ENCODE measurements at regions of chr2 and their contacts with region 1.

Region 1: GRCh38 chr2:31170071-31170698 is 31.9 kb upstream of the GALNT14 start:
- DNase-seq: peak; percentile 63
- H3K4me3 Mint-ChIP-seq: no peak overlapping the region
- H3K27ac Mint-ChIP-seq: no peak overlapping the region
- H3K4me1 Mint-ChIP-seq: no peaks in the 10 kb centered on the region
- H3K27me3 Mint-ChIP-seq: peaks cover 14% of the 10 kb centered on the region

Region 2: GRCh38 chr2:30862054-30862651 is 308.0 kb before region 1 on chr2:
- CTCF ChIA-PET with region 1: interaction called, 57 read pairs
- DNase-seq: peak; percentile 61
- H3K4me3 Mint-ChIP-seq: no peak overlapping the region
- H3K27ac Mint-ChIP-seq: no peak overlapping the region
- H3K4me1 Mint-ChIP-seq: peaks cover 13% of the 10 kb centered on the region
- H3K27me3 Mint-ChIP-seq: peaks cover 22% of the 10 kb centered on the region

Region 3: GRCh38 chr2:31089645-31090044 is 80.5 kb before region 1 on chr2:
- CTCF ChIA-PET with region 1: interaction called, 10 read pairs
- DNase-seq: no peak
- H3K4me3 Mint-ChIP-seq: no peak overlapping the region
- H3K27ac Mint-ChIP-seq: no peak overlapping the region
- H3K4me1 Mint-ChIP-seq: no peaks in the 10 kb centered on the region
- H3K27me3 Mint-ChIP-seq: peaks cover 5% of the 10 kb centered on the region

Region 4: DNA sequence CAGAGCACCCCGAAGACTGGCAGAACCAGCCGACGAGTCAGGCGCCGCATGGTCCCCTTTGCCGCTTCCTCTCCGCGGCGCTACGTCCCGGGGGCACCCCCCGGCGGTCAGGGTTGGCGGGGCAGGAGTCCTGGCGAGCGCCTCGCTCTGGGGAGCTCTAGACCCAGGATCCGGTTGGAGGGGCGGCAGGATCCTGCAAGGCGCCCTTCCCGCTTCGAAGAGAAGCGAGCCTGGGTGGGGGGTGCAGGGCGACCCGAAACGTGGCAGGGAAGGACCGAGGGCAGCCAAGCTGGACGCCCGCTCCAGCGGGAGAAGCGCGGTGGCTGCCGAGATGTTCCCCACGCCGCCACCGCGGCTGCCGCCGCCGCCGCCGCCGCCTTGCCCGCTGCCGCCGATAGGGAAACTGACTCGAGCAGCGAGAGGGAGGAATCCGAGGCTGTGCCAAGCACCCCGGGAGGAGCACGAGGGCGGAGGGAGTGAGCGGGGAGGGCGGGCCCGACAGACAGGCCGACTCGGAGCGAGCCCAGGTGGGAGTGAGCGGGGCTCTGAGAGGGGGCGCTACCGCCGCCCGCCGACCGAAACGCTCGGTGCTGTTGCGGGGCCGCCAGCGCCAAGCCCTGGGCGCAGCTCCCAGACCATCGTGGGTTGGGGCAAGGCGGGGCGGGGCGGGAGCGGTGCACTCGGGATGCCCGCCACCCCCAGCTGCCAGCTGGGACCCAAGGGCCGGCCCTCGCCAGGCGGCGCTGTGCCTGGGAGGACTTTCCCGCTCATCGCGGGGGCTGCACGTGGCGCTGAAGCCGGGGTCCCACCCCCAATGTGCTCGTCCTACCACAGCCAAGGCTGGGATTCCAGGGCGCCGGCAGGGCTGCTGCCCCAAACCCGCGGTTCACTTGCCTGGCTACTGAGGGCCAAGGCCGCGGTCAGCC is 31.9 kb before region 1 on chr2 and contains the start of gene GALNT14:
- CTCF ChIA-PET with region 1: interaction called, 18 read pairs
- DNase-seq: peak; percentile 53
- H3K4me3 Mint-ChIP-seq: peak within 1 kb of the TSS; percentile 43
- H3K27ac Mint-ChIP-seq: no peak within 1 kb of the TSS
- H3K4me1 Mint-ChIP-seq: peaks cover 9% of the 10 kb centered on the region
- H3K27me3 Mint-ChIP-seq: peaks cover 83% of the 10 kb centered on the region

Region 5: DNA sequence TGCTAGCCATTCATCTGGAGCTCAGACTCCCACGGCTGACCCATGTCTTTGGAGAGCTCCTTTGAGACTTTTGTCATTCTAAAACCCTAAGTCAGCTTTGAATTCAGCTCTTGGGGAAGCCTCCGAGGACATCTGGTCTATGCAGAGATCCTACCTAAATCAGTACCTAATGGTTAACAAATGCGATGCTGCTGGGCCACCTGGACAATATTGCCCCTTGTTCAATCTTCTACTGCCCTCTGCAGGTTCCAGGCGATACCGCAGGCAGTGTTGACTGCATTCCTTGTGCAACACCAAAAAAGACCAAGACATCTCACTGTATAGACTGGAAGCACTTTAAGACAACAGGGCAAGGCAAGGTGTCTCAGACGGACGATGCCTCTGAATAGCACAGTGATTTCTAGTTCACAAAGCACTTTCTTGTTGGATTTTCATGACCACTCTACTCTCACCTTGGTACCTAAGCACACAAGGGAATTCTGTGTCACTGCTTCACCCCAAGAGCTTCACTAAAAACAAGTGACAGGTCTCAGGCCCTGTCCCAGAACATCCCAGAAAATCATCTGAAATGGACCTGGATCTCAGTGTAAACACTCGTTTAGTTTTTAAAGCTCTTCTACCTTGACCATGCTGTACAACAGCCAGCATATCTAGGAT is 163.5 kb after region 1 on chr2:
- CTCF ChIA-PET with region 1: interaction called, 30 read pairs
- DNase-seq: peak; percentile 88
- H3K4me3 Mint-ChIP-seq: no peak overlapping the region
- H3K27ac Mint-ChIP-seq: no peak overlapping the region
- H3K4me1 Mint-ChIP-seq: no peaks in the 10 kb centered on the region
- H3K27me3 Mint-ChIP-seq: peaks cover 39% of the 10 kb centered on the region

Region 6: DNA sequence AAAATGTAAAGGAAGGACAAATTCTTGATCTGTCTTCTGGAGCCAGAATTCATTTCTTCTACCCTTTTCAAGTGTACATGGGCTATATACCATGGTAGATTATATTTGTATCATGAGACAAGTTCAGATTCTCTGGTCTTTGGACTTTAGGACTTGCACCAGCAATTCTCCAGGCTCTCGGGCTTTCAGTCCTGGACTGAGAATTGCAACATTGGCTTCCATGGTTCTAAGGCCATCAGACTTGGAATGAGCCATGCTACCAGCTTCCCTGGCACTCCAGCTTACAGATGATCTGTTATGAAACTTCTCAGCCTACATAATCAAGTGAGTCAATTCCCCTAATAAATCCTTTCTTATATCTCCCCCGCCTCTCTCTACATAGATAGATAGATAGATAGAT is 377.3 kb after region 1 on chr2:
- CTCF ChIA-PET with region 1: no interaction called
- DNase-seq: no peak
- H3K4me3 Mint-ChIP-seq: no peak overlapping the region
- H3K27ac Mint-ChIP-seq: no peak overlapping the region
- H3K4me1 Mint-ChIP-seq: no peaks in the 10 kb centered on the region
- H3K27me3 Mint-ChIP-seq: no peaks in the 10 kb centered on the region